ENCODE measurements at regions of chr1 and their contacts with region 1.

Region 1: DNA sequence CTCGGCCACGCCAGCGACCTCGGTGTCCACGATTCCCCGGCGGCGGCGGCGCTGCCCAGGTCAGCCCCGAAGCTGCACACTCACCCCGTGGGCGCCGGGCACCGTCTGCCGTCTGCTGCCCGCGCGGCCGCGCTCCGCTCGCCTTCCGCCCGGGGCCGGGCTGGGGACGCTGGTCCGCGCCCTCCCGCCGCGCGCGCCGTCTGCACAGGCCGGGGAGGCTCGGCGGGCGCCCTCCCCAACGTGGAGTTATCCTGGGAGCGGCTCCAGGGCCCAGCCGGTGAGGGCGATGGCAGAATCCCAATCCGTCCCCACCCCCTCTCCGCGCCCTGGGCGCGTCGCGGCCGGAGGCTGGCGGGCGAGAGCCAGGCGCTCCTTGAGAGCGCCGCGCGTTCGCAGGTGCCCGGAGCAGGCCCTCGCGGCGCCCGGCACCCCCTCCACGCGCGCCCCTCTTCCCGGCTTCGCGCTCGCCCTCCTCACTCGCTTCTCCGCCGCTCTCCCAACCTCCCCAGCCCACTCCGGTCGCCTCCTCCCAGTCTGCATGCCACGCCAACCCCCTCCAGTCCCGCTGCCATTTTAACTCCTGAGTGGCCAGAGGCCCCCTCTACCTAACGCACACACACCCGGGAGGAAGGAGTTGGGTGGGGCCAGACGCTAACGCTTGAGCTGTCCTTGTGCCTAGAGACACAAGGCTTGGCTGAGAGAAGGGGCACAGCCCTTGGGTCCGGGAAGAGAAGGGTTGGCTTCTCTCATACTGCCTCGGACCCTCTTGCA is at the start of gene LRRN2:
- DNase-seq: peak; percentile 29 to 78 (median 67)
- ATAC-seq: peak; percentile 59 to 63
- H3K4me3 ChIP-seq: peak within 1 kb of the TSS; percentile 67
- H3K27ac ChIP-seq: peak within 1 kb of the TSS; percentile 24
- H3K4me1 ChIP-seq: peaks cover 2% of the 10 kb centered on the region
- H3K27me3 ChIP-seq: no peaks in the 10 kb centered on the region
- total RNA-seq, gene LRRN2: 4.8 to 31.6 (median 22.6) TPM

Region 2: GRCh38 chr1:204730826-204731459 is 45.5 kb after region 1 on chr1:
- intact Hi-C with region 1: loop called in 1 of 4 experiments (anchors 10 kb)
- DNase-seq: no peak
- ATAC-seq: no peak
- H3K4me3 ChIP-seq: no peak overlapping the region
- H3K27ac ChIP-seq: no peak overlapping the region
- H3K4me1 ChIP-seq: no peaks in the 10 kb centered on the region
- H3K27me3 ChIP-seq: no peaks in the 10 kb centered on the region

Measured in right cardiac atrium (tissue), 5 donors.